ENCODE measurements at regions of chrX and their contacts with region 1.

Region 1: GRCh38 chrX:4805502-4805901 is 1092.1 kb upstream of the PRKX start:
- DNase-seq: no peak
- H3K4me3 ChIP-seq: no peak overlapping the region
- CTCF ChIP-seq: no peak
- POLR2A ChIP-seq: no peak

Region 2: GRCh38 chrX:4841216-4841745 is 35.8 kb after region 1 on chrX:
- intact Hi-C with region 1: loop called (anchors 1 kb)
- DNase-seq: no peak
- H3K4me3 ChIP-seq: no peak overlapping the region
- CTCF ChIP-seq: no peak
- POLR2A ChIP-seq: no peak